Aorta (tissue), 5 donors: ENCODE measurements at regions of chr19 and their contacts with region 1.

Region 1: GRCh38 chr19:7535035-7535992 is at the start of gene PNPLA6:
- DNase-seq: peak; percentile 98 to 99
- ATAC-seq: peak; percentile 93
- H3K4me3 ChIP-seq: peak within 1 kb of the TSS; percentile 44 to 82
- H3K27ac ChIP-seq: peak within 1 kb of the TSS; percentile 34 to 93
- H3K4me1 ChIP-seq: no peaks in the 10 kb centered on the region
- H3K27me3 ChIP-seq: no peaks in the 10 kb centered on the region
- total RNA-seq, gene PNPLA6: 90.3 to 136 TPM

Region 2: GRCh38 chr19:7349961-7350711 is 185.2 kb before region 1 on chr19:
- intact Hi-C with region 1: loop called in 1 of 2 experiments (anchors 10 kb)
- DNase-seq: peak in 1 of 2 donors; percentile 66
- ATAC-seq: no peak
- H3K4me3 ChIP-seq: no peak overlapping the region
- H3K27ac ChIP-seq: no peak overlapping the region
- H3K4me1 ChIP-seq: no peaks in the 10 kb centered on the region
- H3K27me3 ChIP-seq: no peaks in the 10 kb centered on the region

Region 3: GRCh38 chr19:7394731-7395359 is 140.5 kb before region 1 on chr19:
- intact Hi-C with region 1: loop called (anchors 5 to 10 kb)
- DNase-seq: peak; percentile 93 to 97
- ATAC-seq: peak; percentile 97
- H3K4me3 ChIP-seq: peak overlapping the region; percentile 76 to 88
- H3K27ac ChIP-seq: no peak overlapping the region
- H3K4me1 ChIP-seq: peaks cover 0 to 4% of the 10 kb centered on the region in 2 donors
- H3K27me3 ChIP-seq: no peaks in the 10 kb centered on the region

Region 4: DNA sequence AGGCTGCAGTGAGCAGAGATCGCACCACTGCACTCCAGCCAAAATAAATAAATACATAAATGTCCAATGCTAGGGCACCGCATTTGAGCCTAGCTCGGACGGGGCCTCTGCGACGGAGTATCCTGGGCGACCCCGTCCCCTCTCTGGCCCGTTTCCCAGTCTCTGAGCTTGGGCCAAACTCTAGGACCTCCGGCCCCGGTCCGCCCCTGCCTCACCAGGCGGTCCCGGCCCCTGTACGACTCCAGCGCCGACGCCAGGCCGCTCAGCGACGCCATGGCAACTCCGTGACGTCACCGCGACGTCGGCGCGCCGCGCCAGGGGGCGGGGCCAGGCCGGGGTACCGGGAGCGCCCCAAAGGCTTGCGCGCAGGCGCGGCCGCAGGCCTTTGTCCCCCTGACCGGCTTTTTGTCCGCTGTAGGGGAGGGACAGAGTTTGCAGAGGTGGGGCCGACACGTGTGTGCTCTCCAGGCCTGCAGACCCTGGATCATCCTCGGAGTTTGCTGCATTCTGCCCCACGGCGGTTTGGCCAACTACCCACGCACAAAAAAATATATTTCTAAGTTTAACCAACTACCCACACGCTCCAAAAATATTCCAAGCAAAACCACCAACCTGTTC is 46.5 kb before region 1 on chr19 and contains the start of gene PEX11G:
- intact Hi-C with region 1: loop called in 1 of 2 experiments (anchors 2 kb)
- DNase-seq: peak; percentile 93 to 98
- ATAC-seq: peak; percentile 97
- H3K4me3 ChIP-seq: peak within 1 kb of the TSS; percentile 31 to 33
- H3K27ac ChIP-seq: peak within 1 kb of the TSS in 1 of 2 donors; percentile 39
- H3K4me1 ChIP-seq: no peaks in the 10 kb centered on the region
- H3K27me3 ChIP-seq: no peaks in the 10 kb centered on the region
- total RNA-seq, gene PEX11G: 1.9 TPM

Region 5: DNA sequence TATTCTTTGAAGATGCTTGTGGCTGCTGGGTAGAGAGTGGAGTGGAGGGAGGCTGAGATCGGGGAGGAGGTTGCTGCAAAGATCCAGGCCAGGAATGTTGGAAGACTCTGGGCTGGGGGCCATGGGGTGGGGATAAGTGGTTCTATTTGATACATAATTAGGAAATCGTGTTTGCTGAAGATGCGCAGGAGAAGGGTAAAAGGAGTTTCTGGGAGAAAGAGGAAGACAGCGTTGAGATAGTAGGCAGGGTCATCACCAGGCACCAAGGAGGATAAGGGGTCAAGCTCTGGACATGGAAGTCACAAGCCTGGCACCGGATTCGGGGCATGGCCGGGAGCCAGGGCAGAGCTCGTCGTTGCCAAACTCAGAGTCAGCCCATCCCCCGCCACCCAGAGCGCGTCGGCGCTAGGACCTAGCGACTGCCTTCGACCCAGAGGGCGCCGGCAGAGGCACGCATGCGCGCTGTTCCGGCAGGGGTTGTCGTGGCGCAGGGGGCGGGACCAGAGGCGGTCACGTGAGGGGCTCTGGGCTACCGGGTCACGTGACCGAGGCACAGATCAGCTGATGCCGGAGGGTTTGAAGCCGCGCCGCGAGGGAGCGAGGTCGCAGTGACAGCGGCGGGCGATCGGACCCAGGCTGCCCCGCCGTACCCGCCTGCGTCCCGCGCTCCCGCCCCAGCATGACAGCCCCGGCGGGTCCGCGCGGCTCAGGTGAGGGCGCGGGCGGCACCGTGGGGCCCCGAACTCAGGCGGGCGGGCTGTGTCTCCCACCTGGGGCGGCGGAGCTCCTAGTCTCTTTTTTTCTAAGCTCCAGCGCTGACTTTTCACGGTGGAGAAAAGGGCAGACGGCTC is 13.0 kb before region 1 on chr19 and contains the start of gene MCOLN1:
- intact Hi-C with region 1: loop called in 1 of 2 experiments (anchors 1 kb)
- DNase-seq: peak; percentile 100
- ATAC-seq: peak; percentile 96
- H3K4me3 ChIP-seq: peak within 1 kb of the TSS; percentile 47 to 68
- H3K27ac ChIP-seq: no peak within 1 kb of the TSS
- H3K4me1 ChIP-seq: no peaks in the 10 kb centered on the region
- H3K27me3 ChIP-seq: no peaks in the 10 kb centered on the region
- total RNA-seq, gene MCOLN1: 21.2 to 36.0 TPM

Region 6: DNA sequence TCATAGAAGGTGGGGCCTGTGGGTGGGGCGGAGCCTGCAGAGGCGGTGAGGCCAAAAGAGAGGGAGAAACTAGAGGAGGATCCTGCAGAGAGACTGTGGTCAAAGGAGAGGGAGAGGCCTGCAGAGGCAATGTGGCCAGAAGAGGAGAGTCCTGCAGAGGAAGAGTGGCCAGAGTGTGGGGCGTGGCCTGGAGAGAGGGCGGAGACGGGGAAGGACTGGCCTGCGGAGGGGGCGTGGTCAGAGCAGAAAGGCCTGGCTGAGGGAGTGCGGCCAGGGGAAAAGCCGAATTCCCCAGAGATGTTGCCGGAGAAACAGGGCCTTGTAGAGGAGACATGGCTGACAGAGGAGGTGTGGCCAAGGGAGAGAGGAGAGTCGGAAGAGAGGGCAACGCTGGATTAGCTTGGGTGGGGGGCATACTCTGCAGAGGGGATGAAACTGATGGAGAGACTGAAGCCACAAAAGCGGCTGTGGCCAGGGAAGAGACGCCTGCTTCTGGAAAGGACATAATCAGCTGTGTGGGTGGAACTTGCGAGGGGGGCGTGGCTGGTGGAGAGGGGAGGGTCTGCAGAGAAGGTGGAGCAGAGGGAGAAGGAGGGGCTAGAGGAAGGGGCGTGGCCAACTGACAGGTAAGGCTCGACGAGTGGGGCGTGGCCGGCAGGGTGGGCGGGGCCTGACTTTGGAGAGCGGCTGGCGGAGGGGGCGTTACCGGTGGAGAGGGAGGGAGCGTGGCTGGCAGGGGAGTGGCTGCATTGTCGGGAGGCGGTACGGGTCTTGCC is 336.4 kb after region 1 on chr19:
- intact Hi-C with region 1: no loop called
- DNase-seq: peak; percentile 94
- ATAC-seq: peak; percentile 85
- H3K4me3 ChIP-seq: no peak overlapping the region
- H3K27ac ChIP-seq: no peak overlapping the region
- H3K4me1 ChIP-seq: no peaks in the 10 kb centered on the region
- H3K27me3 ChIP-seq: peaks cover 0 to 1% of the 10 kb centered on the region in 2 donors